Motor neuron (in vitro differentiated cells): ENCODE measurements at regions of chr4 and their contacts with region 1.

Region 1: GRCh38 chr4:115234405-115235093 is 121.1 kb upstream of the NDST4 start:
- ATAC-seq: peak in 3 of 8 experiments; percentile 34 to 72 (median 57)
- H3K4me3 ChIP-seq: no peak overlapping the region
- H3K27ac ChIP-seq: no peak overlapping the region
- H3K4me1 ChIP-seq: peaks cover 0 to 3% of the 10 kb centered on the region in 2 donors

Region 2: DNA sequence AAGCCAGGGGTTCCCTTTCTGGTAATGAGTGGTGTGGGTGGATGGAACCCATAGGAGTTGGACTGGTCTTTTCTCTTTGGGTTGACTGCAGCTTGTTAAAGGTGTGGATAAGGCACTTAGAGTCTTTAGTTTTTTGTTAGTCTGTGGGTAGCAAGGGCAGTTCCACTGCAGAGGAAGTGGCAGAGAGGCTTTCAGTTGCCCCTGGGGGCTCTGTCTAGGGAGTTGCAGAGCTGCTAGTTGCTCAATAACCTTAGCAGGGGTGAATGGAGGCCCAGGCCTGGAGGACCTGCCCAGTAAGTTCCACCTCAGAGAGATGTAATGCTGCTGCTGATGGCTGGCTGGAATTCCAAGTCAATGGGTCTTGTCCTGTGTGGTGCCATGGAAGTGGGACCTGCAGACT is 161.5 kb after region 1 on chr4:
- in situ Hi-C with region 1: loop called in 1 of 9 experiments (anchors 25 kb)
- ATAC-seq: no peak
- H3K4me3 ChIP-seq: no peak overlapping the region
- H3K27ac ChIP-seq: no peak overlapping the region
- H3K4me1 ChIP-seq: no peaks in the 10 kb centered on the region

Region 3: GRCh38 chr4:115537387-115537786 is 302.8 kb after region 1 on chr4:
- in situ Hi-C with region 1: loop called in 2 of 9 experiments (anchors 25 kb)
- ATAC-seq: no peak
- H3K4me3 ChIP-seq: no peak overlapping the region
- H3K27ac ChIP-seq: no peak overlapping the region
- H3K4me1 ChIP-seq: no peaks in the 10 kb centered on the region